RWPE1 (cell line): ENCODE measurements at regions of chr6 and their contacts with region 1.

Region 1: DNA sequence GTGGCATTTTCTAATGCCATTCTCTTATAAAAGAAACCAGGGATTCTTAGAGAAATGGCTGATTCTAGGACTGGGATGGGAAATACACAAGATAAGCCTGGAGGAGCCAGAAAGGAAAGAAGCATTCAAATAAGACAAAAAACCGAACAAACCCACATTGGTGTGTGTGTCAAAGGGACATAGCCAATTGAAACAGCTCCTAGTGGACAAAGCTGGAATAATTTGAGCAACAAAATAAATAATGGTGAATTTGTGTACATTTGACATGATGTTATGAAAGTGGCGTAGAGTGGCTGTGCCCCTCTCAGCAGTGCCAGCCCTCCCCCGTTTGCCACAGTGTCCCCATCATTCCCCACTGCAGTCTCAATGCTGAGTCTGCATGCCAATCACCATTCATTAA is 55.5 kb downstream of the B3GAT2 start:
- DNase-seq: no peak
- H3K27ac ChIP-seq: no peak overlapping the region
- CTCF ChIP-seq: no peak

Region 2: GRCh38 chr6:70884074-70884983 is 17.0 kb before region 1 on chr6:
- CTCF ChIA-PET with region 1: interaction called, 10 read pairs
- POLR2A ChIA-PET with region 1: no interaction called
- DNase-seq: peak; percentile 63
- H3K27ac ChIP-seq: no peak overlapping the region
- CTCF ChIP-seq: peak; percentile 90